K562 (cell line): ENCODE measurements at regions of chr3 and their contacts with region 1.

Region 1: DNA sequence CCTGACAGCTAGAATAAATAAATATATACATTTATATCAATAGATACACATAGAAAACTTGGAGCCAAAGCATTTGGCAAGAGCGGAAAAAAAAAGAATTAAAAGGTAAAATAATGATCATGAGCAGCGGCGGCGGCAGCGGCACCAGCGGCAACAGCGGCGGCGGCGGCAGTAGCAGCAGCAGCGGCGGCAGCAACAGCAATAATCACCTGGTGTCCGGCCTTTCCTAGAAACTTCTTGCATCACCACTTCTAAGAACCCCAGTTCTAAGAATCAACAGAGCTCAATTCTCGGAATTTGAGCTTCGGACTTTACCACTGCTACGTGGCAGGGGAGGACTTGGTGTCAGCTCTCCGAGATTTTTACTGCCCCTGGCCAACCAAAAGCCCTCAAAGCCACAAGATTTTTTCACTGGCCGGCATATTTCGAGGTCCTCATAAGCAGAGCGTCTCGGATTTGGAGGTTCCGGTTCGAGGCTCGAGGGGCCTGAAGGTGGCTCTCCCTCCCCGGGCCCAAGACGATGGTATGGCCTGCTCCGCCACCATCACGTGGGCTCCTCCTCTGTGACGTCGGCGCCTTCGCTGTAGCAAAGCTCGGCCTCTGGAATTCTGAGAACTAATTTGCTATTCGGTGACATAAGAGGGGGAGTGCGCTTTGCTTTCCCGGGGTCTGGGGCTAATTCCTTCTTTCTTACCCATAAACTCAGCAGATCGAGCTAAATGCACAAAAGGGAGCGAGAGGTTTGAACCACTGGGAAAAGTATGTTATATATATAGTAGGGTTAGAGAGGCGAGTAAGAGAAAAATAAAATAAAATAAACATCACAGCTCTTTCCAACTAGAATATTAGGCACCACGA is at the start of gene BCL6:
- DNase-seq: peak; percentile 89 to 96 (median 92)
- ATAC-seq: peak; percentile 63
- H3K4me3 ChIP-seq: peak within 1 kb of the TSS; percentile 87
- H3K27ac ChIP-seq: peak within 1 kb of the TSS; percentile 95
- H3K4me1 ChIP-seq: peaks cover 17 to 25% of the 10 kb centered on the region in 2 experiments
- H3K27me3 ChIP-seq: no peaks in the 10 kb centered on the region
- CTCF ChIP-seq: no peak
- EP300 ChIP-seq: peak; percentile 85
- POLR2A ChIP-seq: peak; percentile 90
- RAD21 ChIP-seq: no peak
- polyA plus RNA-seq, gene BCL6: 0.08 to 0.23 TPM

Region 2: GRCh38 chr3:187919048-187919447 is 173.6 kb after region 1 on chr3:
- CTCF ChIA-PET with region 1: no interaction called
- POLR2A ChIA-PET with region 1: no interaction called
- in situ Hi-C with region 1: no loop called
- intact Hi-C with region 1: loop called (anchors 10 kb)
- DNase-seq: no peak
- ATAC-seq: no peak
- H3K4me3 ChIP-seq: no peak overlapping the region
- H3K27ac ChIP-seq: no peak overlapping the region
- H3K4me1 ChIP-seq: no peaks in the 10 kb centered on the region
- H3K27me3 ChIP-seq: peaks cover 0 to 4% of the 10 kb centered on the region in 2 experiments; a peak in 1 of 5 replicates
- CTCF ChIP-seq: no peak
- EP300 ChIP-seq: no peak
- POLR2A ChIP-seq: no peak
- RAD21 ChIP-seq: no peak

Region 3: GRCh38 chr3:187986514-187986934 is 241.1 kb after region 1 on chr3:
- CTCF ChIA-PET with region 1: no interaction called
- POLR2A ChIA-PET with region 1: interaction called, 3 read pairs
- in situ Hi-C with region 1: no loop called
- intact Hi-C with region 1: loop called (anchors 10 kb)
- DNase-seq: peak in 2 of 4 experiments; percentile 28 to 43
- ATAC-seq: peak; percentile 87
- H3K4me3 ChIP-seq: no peak overlapping the region
- H3K27ac ChIP-seq: peak overlapping the region; percentile 28; the same call in 1 of the 3 replicates
- H3K4me1 ChIP-seq: peaks cover 0 to 17% of the 10 kb centered on the region in 2 experiments; a peak in 3 of 5 replicates
- H3K27me3 ChIP-seq: peaks cover 0 to 5% of the 10 kb centered on the region in 2 experiments; a peak in 1 of 5 replicates
- CTCF ChIP-seq: no peak
- EP300 ChIP-seq: no peak; the same call in 1 of the 2 replicates
- POLR2A ChIP-seq: no peak
- RAD21 ChIP-seq: no peak

Region 4: DNA sequence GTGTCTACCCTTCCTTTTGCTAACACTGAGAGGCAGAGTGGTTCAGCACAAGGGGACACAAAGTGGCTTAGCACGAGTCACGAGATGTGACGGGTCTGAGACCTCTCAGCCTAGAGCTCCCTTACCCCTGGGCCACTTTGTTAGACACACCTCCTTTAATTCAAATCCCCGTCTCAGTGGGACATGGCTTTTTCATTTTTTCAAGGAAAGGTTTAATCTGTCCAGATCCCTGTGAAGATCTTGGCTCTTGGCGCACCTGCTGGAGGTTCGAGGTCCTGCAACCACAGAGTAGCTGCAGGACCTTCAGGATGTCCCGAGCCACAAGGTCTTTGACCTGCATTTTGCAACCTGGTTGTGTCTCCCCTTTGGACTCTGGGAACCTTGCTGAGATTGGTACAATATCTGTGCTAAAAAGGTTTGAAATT is 460.6 kb after region 1 on chr3:
- CTCF ChIA-PET with region 1: no interaction called
- POLR2A ChIA-PET with region 1: interaction called, 3 read pairs
- in situ Hi-C with region 1: no loop called
- intact Hi-C with region 1: loop called (anchors 5 kb)
- DNase-seq: peak; percentile 8 to 22 (median 18)
- ATAC-seq: peak; percentile 91
- H3K4me3 ChIP-seq: no peak overlapping the region
- H3K27ac ChIP-seq: no peak overlapping the region
- H3K4me1 ChIP-seq: no peaks in the 10 kb centered on the region
- H3K27me3 ChIP-seq: no peaks in the 10 kb centered on the region; a peak in 1 of 5 replicates
- CTCF ChIP-seq: peak; percentile 28 to 35 (median 34); a peak in 4 of 6 replicates
- EP300 ChIP-seq: no peak
- POLR2A ChIP-seq: no peak
- RAD21 ChIP-seq: peak in 1 of 2 experiments; percentile 9; a peak in 1 of 4 replicates

Region 5: DNA sequence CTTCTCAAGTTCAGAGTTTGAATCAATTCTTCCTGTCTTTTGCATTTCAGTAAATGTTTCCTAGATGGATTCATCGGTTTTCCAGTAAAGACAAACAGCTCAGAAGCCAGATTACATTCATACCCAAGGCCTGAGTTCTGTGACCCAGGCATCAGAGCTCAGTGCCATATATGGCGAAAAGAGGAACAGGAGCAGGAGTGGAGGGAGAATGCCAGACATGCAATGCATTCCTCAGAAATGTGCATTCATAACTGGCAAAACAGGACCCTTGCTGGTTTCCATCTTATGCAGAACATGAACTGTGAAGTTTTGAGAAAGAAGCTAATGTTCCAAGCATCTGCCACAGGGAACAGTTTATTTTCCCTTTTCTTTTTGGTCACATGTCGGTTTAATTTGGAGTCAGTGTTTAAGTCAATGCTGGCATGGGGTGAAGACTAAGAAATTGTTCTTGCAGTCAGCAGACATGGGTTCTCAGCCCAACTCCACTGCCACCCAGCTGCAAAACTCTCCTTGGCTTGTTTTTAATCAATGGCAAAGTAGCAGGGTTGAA is 525.1 kb after region 1 on chr3:
- CTCF ChIA-PET with region 1: no interaction called
- POLR2A ChIA-PET with region 1: no interaction called
- in situ Hi-C with region 1: no loop called
- intact Hi-C with region 1: loop called (anchors 10 kb)
- DNase-seq: no peak
- ATAC-seq: no peak
- H3K4me3 ChIP-seq: no peak overlapping the region
- H3K27ac ChIP-seq: no peak overlapping the region
- H3K4me1 ChIP-seq: no peaks in the 10 kb centered on the region
- H3K27me3 ChIP-seq: no peaks in the 10 kb centered on the region
- CTCF ChIP-seq: no peak
- EP300 ChIP-seq: no peak
- POLR2A ChIP-seq: no peak
- RAD21 ChIP-seq: no peak

Region 6: DNA sequence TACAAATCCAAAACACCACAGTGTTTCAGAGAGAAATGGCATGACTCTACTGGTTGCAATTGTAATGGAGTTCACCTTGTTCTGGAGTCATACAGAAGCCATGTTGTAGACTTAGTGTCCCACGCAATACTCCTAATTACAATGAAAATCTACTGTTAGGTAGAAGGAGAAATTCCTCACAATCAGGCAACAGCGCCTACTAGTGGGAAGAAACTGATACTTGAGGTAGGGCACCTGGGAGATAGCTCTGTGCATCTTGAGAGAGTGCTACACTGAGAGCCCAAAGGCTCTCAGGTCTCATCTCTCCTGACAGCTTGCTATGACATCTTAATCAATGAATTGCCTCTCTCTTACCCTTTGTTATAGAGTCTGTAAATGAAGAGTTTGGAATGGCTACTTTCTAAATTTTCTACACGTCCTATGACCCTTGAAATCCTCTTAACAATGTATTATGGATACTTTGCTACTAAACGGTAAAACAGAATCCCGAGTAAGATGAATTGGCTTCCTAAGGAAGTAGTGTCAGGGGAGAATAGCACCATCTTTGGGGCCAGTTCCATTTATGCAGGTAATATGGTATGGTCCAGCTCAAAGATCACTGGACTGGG is 1003.7 kb after region 1 on chr3:
- CTCF ChIA-PET with region 1: no interaction called
- POLR2A ChIA-PET with region 1: no interaction called
- in situ Hi-C with region 1: no loop called
- intact Hi-C with region 1: loop called (anchors 10 kb)
- DNase-seq: peak; percentile 4 to 17 (median 16)
- ATAC-seq: peak; percentile 38; the same call in 1 of the 3 replicates
- H3K4me3 ChIP-seq: no peak overlapping the region
- H3K27ac ChIP-seq: no peak overlapping the region
- H3K4me1 ChIP-seq: no peaks in the 10 kb centered on the region
- H3K27me3 ChIP-seq: no peaks in the 10 kb centered on the region
- CTCF ChIP-seq: peak; percentile 2 to 38 (median 31); a peak in 1 of 6 replicates
- EP300 ChIP-seq: no peak
- POLR2A ChIP-seq: no peak
- RAD21 ChIP-seq: peak in 1 of 2 experiments; percentile 21; a peak in 1 of 4 replicates

Region 7: GRCh38 chr3:189148081-189148507 is 1402.7 kb after region 1 on chr3:
- CTCF ChIA-PET with region 1: interaction called, 3 read pairs
- POLR2A ChIA-PET with region 1: no interaction called
- in situ Hi-C with region 1: loop called (anchors 25 kb)
- intact Hi-C with region 1: no loop called
- DNase-seq: peak; percentile 40 to 57 (median 51)
- ATAC-seq: peak; percentile 82
- H3K4me3 ChIP-seq: no peak overlapping the region
- H3K27ac ChIP-seq: no peak overlapping the region
- H3K4me1 ChIP-seq: no peaks in the 10 kb centered on the region
- H3K27me3 ChIP-seq: no peaks in the 10 kb centered on the region
- CTCF ChIP-seq: peak; percentile 34 to 71 (median 61)
- EP300 ChIP-seq: no peak
- POLR2A ChIP-seq: no peak
- RAD21 ChIP-seq: peak; percentile 51 to 65; a peak in 3 of 4 replicates